Mammary epithelial cell (primary cell): ENCODE measurements at regions of chr3 and their contacts with region 1.

Region 1: DNA sequence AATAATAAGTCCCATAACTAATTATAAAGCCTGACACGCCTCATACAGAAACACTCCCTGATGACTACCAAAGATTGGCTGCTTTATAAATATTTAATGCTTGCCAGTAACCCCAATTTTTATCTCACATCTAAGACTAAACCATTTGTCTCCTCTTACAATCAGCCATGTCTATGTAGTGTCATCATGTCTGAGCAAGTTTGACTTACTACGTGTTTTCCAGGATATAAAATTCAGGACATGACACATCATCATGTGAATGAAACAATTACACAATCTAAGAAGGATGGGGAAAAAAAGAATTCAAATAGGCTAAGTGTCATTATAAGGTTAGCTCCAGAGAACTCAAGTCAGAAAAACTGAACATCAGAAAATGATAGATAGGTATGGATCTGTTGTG is 208.7 kb downstream of the MECOM start:
- DNase-seq: peak; percentile 97
- H3K4me3 ChIP-seq: no peak overlapping the region
- H3K27ac ChIP-seq: peak overlapping the region; percentile 92
- H3K4me1 ChIP-seq: peaks cover 16% of the 10 kb centered on the region
- H3K27me3 ChIP-seq: no peaks in the 10 kb centered on the region
- CTCF ChIP-seq: no peak

Region 2: DNA sequence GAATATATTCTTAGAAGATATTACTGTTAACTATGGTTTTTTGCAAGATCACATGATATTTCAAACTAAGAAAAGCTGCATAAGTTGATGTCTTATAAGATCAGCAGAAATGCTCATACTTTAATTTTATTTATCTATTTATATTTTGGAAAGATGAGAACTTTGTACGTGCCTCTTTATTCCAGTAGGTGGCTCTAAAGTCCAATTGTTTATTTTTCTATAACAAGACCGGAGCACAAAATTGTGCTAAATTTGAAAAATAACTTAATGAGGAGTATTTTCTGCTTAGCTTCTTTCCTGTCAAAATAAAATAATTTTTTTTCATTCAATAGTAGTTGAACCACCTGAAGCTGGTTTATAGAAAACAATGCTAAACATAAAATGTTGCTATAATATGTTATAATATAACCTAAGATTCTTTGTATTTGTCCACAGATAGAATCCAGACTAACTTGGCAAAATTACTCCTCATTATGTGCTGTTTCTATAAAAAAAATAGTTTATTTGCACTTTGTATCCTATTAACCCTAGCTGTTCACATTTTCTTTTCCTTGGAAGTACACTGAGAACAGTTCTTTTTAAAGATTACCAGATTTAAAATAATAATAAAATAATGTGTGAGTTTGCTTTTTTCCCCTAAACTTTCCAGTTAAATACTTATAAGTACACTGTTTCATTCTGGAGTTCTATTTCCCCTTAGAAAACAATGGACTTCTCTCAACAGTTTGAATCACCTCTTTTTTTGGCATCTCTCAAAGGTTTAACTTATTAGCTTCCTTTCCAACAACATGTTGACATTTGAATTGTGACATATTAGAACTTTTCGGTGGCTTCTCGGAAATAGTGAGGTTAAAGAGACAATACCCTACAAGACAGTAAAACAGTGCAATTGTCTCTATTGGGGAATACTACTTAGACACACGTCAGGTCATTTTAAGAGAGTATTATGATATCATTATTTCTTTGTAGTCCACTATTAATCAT is 321.4 kb before region 1 on chr3:
- CTCF ChIA-PET with region 1: no interaction called
- dilution Hi-C with region 1: no loop called
- in situ Hi-C with region 1: no loop called
- intact Hi-C with region 1: no loop called
- DNase-seq: no peak
- H3K4me3 ChIP-seq: no peak overlapping the region
- H3K27ac ChIP-seq: no peak overlapping the region
- H3K4me1 ChIP-seq: peaks cover 5% of the 10 kb centered on the region
- H3K27me3 ChIP-seq: no peaks in the 10 kb centered on the region
- CTCF ChIP-seq: peak; percentile 41 to 55

Region 3: GRCh38 chr3:169264711-169265110 is 190.1 kb before region 1 on chr3:
- CTCF ChIA-PET with region 1: no interaction called
- dilution Hi-C with region 1: no loop called
- in situ Hi-C with region 1: no loop called
- intact Hi-C with region 1: no loop called
- DNase-seq: peak; percentile 54
- H3K4me3 ChIP-seq: no peak overlapping the region
- H3K27ac ChIP-seq: no peak overlapping the region
- H3K4me1 ChIP-seq: no peaks in the 10 kb centered on the region
- H3K27me3 ChIP-seq: no peaks in the 10 kb centered on the region
- CTCF ChIP-seq: no peak

Region 4: DNA sequence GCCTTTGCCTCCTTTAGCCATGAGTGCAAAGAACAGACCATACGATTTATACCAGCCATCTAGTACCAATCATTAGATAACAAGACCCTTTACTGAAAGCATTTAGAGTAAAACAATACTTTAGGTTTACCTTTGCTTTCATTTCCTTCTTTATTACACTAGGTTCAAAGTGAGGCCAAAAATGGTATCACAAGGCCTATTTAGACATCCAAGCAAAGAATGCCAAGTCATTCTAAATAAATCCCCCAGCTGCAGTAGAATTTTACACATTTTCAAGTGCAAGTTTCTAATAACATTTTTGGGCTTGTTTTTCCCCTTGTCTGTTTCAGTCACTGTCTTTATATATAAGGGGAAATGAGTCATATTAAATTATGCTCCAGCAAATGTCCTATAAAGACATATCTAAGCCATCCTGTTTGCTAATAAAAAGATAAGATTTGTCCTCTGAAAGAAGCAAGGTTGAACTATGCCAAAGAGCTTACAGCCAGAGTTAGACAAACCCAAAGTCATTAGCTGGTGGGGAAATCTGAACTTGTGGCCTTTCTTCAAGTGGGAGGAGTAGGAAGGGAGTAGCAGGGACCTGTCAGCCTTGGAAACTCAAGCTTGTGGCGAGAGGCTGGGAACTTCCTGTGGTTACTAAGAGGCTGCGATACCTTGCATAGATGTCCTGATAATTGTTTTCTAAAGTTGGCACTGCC is 24.0 kb before region 1 on chr3:
- CTCF ChIA-PET with region 1: no interaction called
- dilution Hi-C with region 1: no loop called
- in situ Hi-C with region 1: no loop called
- intact Hi-C with region 1: no loop called
- DNase-seq: peak; percentile 80
- H3K4me3 ChIP-seq: no peak overlapping the region
- H3K27ac ChIP-seq: no peak overlapping the region
- H3K4me1 ChIP-seq: peaks cover 15% of the 10 kb centered on the region
- H3K27me3 ChIP-seq: no peaks in the 10 kb centered on the region
- CTCF ChIP-seq: no peak

Region 5: GRCh38 chr3:169478566-169479313 is 23.9 kb after region 1 on chr3:
- CTCF ChIA-PET with region 1: interaction called, 13 read pairs
- dilution Hi-C with region 1: no loop called
- in situ Hi-C with region 1: no loop called
- intact Hi-C with region 1: no loop called
- DNase-seq: peak; percentile 62
- H3K4me3 ChIP-seq: no peak overlapping the region
- H3K27ac ChIP-seq: no peak overlapping the region
- H3K4me1 ChIP-seq: peaks cover 4% of the 10 kb centered on the region
- H3K27me3 ChIP-seq: no peaks in the 10 kb centered on the region
- CTCF ChIP-seq: no peak

Region 6: DNA sequence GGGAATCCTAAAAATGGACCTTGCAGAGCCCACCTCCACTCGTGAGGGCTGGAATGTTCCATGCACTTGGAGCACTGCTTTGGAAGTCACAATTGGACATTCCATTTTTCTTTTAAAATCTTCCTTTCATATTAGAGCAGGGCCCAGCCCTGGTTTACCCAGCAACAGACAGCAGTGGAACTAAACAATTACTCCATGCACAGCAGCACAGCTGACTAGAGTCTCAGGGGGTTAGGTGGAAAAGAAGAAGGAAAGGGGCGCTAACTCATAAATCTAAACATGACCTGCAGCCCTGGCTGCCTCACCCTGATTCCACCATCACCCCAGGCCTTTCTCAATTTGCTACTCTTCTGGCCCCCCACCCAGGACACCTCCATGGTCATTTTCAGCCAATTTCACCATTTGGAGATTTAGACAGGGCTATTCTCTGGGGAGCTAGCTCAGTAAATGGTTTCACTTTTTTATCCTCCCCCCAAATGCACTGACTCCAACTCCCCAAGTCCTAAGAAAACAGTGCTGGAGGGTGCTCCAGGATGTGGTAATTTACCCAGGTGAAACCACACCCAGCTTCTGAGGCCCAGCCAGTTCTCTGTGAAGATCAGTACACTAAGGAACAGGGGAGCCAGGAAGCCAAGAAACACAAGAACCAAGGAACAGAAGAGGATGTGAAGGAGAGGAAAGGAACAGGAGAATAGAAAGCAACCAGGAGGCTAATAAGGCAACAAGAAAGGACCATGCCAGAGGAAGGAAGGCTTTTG is 416.5 kb after region 1 on chr3:
- CTCF ChIA-PET with region 1: no interaction called
- dilution Hi-C with region 1: no loop called
- in situ Hi-C with region 1: no loop called
- intact Hi-C with region 1: no loop called
- DNase-seq: peak; percentile 51
- H3K4me3 ChIP-seq: no peak overlapping the region
- H3K27ac ChIP-seq: no peak overlapping the region
- H3K4me1 ChIP-seq: peaks cover 10% of the 10 kb centered on the region
- H3K27me3 ChIP-seq: no peaks in the 10 kb centered on the region
- CTCF ChIP-seq: no peak